ENCODE measurements at regions of chr7 and their contacts with region 1.

Region 1: GRCh38 chr7:131945313-131945911 is 389.0 kb upstream of the PODXL start:
- DNase-seq: peak; percentile 67
- ATAC-seq: peak; percentile 76
- H3K4me3 ChIP-seq: peak overlapping the region; percentile 55
- H3K27ac ChIP-seq: no peak overlapping the region
- H3K4me1 ChIP-seq: peaks cover 24% of the 10 kb centered on the region
- H3K27me3 ChIP-seq: no peaks in the 10 kb centered on the region; the same call in 1 of the 2 replicates
- CTCF ChIP-seq: peak; percentile 89

Region 2: GRCh38 chr7:131688738-131689661 is 256.4 kb before region 1 on chr7:
- CTCF ChIA-PET with region 1: no interaction called
- POLR2A ChIA-PET with region 1: no interaction called
- intact Hi-C with region 1: loop called (anchors 10 kb)
- DNase-seq: peak; percentile 73
- ATAC-seq: peak; percentile 74
- H3K4me3 ChIP-seq: no peak overlapping the region
- H3K27ac ChIP-seq: no peak overlapping the region
- H3K4me1 ChIP-seq: no peaks in the 10 kb centered on the region
- H3K27me3 ChIP-seq: peaks cover 41% of the 10 kb centered on the region
- CTCF ChIP-seq: peak; percentile 93

Region 3: DNA sequence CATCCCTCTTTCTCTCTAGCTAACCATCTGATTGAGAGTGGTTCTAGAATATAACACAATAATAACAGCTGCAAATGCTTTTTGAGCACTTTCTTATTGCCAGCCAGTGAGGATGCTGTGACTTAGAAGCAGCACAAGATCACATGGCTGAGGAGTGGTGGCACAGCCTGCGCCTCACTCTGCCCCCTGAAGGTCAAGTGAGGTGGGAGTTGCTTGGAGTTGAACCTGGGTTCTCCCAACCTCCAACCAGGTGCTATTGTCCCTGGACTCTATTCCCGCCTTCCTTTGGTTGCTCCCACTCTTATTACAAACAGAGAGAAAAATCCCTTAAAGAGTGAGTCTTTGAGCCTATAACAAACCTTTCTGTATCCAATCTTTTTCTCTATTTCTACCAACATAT is 108.7 kb before region 1 on chr7:
- CTCF ChIA-PET with region 1: no interaction called
- POLR2A ChIA-PET with region 1: no interaction called
- intact Hi-C with region 1: no loop called
- DNase-seq: no peak
- ATAC-seq: no peak
- H3K4me3 ChIP-seq: no peak overlapping the region
- H3K27ac ChIP-seq: no peak overlapping the region
- H3K4me1 ChIP-seq: no peaks in the 10 kb centered on the region
- H3K27me3 ChIP-seq: peaks cover 89% of the 10 kb centered on the region
- CTCF ChIP-seq: no peak

Region 4: GRCh38 chr7:132049462-132050304 is 104.3 kb after region 1 on chr7:
- CTCF ChIA-PET with region 1: no interaction called
- POLR2A ChIA-PET with region 1: no interaction called
- intact Hi-C with region 1: loop called (anchors 1 kb)
- DNase-seq: peak; percentile 58
- ATAC-seq: no peak
- H3K4me3 ChIP-seq: no peak overlapping the region
- H3K27ac ChIP-seq: no peak overlapping the region
- H3K4me1 ChIP-seq: no peaks in the 10 kb centered on the region
- H3K27me3 ChIP-seq: no peaks in the 10 kb centered on the region
- CTCF ChIP-seq: peak; percentile 84

Region 5: DNA sequence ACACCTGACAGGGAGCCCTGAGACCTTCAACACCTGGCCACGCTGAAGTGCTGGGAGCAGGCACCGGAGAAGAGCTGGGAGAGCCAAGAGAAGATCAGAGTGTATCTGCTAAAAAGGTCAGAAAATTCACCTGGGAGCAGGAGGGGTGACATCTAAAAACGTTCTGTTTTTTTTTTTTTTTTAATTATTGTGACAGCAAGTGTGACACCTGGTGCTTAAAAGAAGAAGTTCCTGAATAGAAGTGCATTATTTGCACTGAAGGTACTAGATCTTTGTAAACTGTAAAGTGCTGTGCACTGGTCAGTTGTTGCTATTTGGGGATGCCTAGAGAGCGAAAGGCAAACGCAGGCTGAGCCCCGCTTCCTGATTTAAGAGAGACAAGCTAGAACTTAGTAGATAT is 208.8 kb after region 1 on chr7:
- CTCF ChIA-PET with region 1: no interaction called
- POLR2A ChIA-PET with region 1: no interaction called
- intact Hi-C with region 1: loop called (anchors 1 kb)
- DNase-seq: peak; percentile 8
- ATAC-seq: no peak
- H3K4me3 ChIP-seq: no peak overlapping the region
- H3K27ac ChIP-seq: no peak overlapping the region
- H3K4me1 ChIP-seq: no peaks in the 10 kb centered on the region
- H3K27me3 ChIP-seq: no peaks in the 10 kb centered on the region
- CTCF ChIP-seq: peak; percentile 50; the same call in 1 of the 2 replicates

Region 6: DNA sequence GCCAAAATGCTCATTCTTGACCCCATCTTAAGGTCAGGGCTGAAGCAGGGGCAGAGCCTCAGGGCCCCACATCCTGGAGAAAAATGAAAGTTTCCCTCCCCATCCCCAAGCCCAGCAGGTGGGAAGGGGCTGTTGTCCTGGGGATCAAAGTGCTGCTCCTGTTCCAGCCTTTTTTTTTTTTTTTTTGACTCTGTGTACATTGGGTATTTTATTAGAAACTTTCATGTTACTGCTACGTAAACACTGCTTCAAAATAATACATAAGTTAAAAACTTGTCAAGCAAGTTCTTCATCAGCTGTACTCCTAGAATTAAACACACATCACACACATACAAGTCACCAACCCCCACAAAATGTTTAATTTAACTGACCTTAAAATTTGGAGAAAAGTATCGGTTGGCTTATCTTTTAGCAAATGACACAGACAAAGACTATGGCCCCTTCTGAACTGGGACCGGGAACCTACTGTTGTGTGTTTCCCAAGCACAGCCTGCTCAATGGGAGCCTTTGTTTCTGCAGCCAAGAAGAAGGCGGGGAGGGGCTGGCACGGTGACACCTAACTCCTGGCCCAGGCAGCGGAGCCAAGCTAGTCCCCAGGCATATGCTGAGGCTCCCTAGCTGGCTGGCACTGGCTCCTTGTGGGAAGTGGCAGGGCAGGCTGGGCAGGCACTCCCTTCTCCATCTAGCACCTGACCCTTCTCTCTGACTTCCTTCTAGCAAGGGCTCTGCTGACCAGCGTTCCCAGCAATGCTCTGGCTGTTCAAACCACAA is 305.7 kb after region 1 on chr7:
- CTCF ChIA-PET with region 1: no interaction called
- POLR2A ChIA-PET with region 1: no interaction called
- intact Hi-C with region 1: loop called (anchors 5 kb)
- DNase-seq: peak; percentile 79
- ATAC-seq: peak; percentile 93
- H3K4me3 ChIP-seq: peak overlapping the region; percentile 11; the same call in 1 of the 2 replicates
- H3K27ac ChIP-seq: peak overlapping the region; percentile 68
- H3K4me1 ChIP-seq: peaks cover 29% of the 10 kb centered on the region
- H3K27me3 ChIP-seq: no peaks in the 10 kb centered on the region
- CTCF ChIP-seq: no peak

Region 7: DNA sequence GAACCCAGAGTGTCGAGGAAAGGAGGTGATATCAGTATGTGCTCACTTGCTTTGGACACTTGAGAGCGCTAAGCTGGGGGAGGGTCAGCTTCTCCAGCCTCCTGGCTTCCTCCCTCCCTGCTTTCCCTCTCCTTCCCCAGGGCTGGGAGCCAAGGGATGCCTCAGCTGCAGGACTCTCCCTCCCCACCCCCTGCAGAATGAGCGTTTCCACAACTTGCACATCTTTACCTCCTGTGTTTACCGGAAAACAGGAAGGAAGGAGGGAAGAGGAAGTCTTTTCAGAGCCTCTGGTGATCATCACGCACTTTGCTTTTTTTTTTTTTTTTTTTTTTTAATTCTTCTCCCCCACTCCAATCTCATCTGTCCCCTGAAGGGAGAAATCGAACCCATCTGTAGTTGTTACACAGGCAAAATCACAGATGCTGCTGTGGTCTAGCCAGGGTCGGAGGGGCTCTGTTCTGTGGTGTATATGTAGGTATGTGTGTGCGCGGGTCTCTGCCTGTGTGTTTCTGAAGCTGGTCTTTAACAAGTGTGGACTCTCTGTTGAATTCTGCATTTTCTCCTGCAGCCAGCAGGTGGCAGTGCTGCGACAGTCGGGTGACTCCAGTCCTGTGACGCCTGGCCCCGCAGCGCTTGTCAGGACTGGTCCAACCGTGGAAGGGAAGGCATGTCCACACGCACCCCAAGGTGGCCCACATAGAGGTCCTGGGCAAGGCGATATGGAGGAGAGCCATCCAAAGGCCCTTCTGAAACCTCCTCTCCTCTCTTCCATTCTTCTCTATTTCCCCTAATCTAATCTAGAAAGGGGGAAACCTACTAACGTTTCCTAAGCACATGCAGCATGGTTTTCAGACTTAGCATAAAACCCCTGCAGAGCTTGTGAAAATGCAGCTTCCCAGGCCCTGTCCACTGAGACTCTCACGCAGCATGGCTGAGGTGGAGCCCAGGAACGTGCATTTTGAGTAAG is 373.2 kb after region 1 on chr7:
- CTCF ChIA-PET with region 1: no interaction called
- POLR2A ChIA-PET with region 1: no interaction called
- intact Hi-C with region 1: loop called (anchors 2 kb)
- DNase-seq: peak; percentile 79
- ATAC-seq: peak; percentile 94
- H3K4me3 ChIP-seq: peak overlapping the region; percentile 11; the same call in 1 of the 2 replicates
- H3K27ac ChIP-seq: no peak overlapping the region
- H3K4me1 ChIP-seq: peaks cover 5% of the 10 kb centered on the region; the same call in 1 of the 2 replicates
- H3K27me3 ChIP-seq: no peaks in the 10 kb centered on the region
- CTCF ChIP-seq: peak; percentile 89

Region 8: GRCh38 chr7:132580717-132581285 is 635.4 kb after region 1 on chr7:
- CTCF ChIA-PET with region 1: no interaction called
- POLR2A ChIA-PET with region 1: no interaction called
- intact Hi-C with region 1: loop called (anchors 1 kb)
- DNase-seq: peak; percentile 71
- ATAC-seq: peak; percentile 77
- H3K4me3 ChIP-seq: no peak overlapping the region
- H3K27ac ChIP-seq: no peak overlapping the region
- H3K4me1 ChIP-seq: peaks cover 4% of the 10 kb centered on the region; the same call in 1 of the 2 replicates
- H3K27me3 ChIP-seq: peaks cover 20% of the 10 kb centered on the region
- CTCF ChIP-seq: peak; percentile 87